Left colon (tissue), 2 donors: ENCODE measurements at regions of chr18 and their contacts with region 1.

Region 1: GRCh38 chr18:1446765-1447164 is 542.1 kb downstream of the ADCYAP1 start:
- DNase-seq: no peak
- ATAC-seq: no peak

Region 2: GRCh38 chr18:1392046-1392445 is 54.7 kb before region 1 on chr18:
- intact Hi-C with region 1: loop called in 1 of 2 experiments (anchors 10 kb)
- DNase-seq: no peak
- ATAC-seq: no peak

Region 3: DNA sequence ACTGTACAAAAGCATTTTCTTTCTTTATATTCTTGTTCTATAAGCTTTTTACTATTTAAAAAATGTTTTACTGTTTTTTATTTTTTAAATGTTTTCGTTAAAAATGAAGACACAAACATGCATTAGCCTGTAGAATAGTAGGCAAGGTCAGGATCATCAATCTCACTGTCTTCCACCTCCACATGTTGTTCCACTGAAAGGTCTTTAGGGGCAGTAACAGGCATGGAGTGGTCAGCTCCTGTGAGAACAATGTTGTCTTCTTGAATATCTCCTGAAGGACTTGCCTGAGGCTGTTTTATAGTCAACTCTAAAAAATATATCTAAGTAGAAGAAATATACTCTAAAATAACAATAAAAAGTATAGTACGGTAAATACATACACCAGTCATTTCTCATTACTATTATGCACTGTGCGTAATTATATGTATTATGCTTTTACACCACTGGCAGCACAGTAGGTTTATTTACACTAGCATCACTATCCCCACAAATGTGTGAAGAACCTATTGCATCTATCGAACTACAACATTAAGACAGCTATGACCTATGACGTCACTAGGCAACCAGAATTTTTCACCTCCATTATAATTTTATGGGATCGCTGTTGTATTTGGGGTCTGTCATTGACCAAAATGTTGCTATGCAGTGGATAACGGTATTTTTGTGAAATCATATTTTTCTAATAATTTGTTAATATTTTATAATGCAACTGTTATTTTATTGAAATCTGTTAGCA is 360.3 kb after region 1 on chr18:
- intact Hi-C with region 1: no loop called
- DNase-seq: no peak
- ATAC-seq: no peak